BJ (cell line): ENCODE measurements at regions of chr1 and their contacts with region 1.

Region 1: GRCh38 chr1:24502709-24503058 is at the start of gene RCAN3:
- DNase-seq: no peak
- H3K4me3 ChIP-seq: peak within 1 kb of the TSS; percentile 73
- H3K27me3 ChIP-seq: no peaks in the 10 kb centered on the region
- CTCF ChIP-seq: no peak
- polyA plus RNA-seq, gene RCAN3: 6.3 and 7.6 TPM in 2 replicates

Region 2: DNA sequence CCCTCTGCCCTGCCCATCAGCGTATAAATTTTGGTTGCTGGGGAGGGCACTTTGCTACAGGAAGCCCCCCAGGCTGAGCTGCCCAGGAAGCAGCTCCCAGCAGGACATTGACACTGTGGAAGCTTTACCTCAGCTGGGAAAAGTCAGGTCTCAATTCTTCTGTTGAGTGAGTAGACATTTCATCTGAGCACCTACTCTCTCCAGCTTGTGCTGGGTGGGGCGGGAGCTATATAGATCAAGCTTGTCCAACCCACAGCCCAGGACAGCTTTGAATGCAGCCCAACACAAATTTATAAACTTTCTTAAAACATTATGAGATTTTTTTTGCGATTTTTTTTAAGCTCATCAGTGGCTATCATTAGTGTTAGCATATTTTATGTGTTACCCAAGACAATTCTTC is 77.7 kb before region 1 on chr1:
- CTCF ChIA-PET with region 1: no interaction called
- POLR2A ChIA-PET with region 1: interaction called, 11 read pairs
- DNase-seq: no peak
- H3K4me3 ChIP-seq: no peak overlapping the region
- H3K27me3 ChIP-seq: no peaks in the 10 kb centered on the region
- CTCF ChIP-seq: no peak

Region 3: DNA sequence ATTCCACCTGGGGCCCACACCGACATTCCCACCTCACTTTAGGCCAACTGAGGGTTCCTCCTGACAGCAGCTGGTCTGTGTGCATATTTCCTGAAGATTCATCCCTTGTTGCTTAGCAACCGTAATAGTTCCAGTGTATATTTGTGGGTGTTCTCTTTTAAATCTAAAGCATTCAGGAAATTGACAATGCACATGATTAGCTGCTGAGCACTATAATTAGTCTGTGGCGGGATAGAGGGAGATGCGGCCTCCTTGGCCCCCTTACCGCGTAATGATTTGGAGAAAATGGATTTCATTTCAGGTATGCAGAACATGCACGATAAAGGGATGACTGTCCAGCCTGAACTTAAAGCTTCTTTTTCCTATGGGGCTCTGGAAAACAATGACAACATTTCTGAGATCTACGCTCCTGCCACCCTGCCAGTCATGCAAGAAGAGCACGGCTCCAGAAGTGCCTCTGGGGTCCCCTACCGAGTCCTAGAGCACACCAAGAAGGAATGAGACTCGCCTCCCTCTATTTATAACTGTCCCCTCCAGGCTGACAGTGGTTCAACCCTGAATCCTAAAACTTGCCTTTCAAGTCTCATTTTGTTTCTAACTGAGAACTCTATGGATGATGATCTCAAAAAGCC is 33.9 kb before region 1 on chr1:
- CTCF ChIA-PET with region 1: no interaction called
- POLR2A ChIA-PET with region 1: no interaction called
- DNase-seq: no peak
- H3K4me3 ChIP-seq: no peak overlapping the region
- H3K27me3 ChIP-seq: no peaks in the 10 kb centered on the region
- CTCF ChIP-seq: no peak

Region 4: GRCh38 chr1:24491577-24492360 is 10.9 kb before region 1 on chr1:
- CTCF ChIA-PET with region 1: interaction called, 14 read pairs
- POLR2A ChIA-PET with region 1: no interaction called
- DNase-seq: no peak
- H3K4me3 ChIP-seq: no peak overlapping the region
- H3K27me3 ChIP-seq: peaks cover 2% of the 10 kb centered on the region; the same call in 1 of the 2 replicates
- CTCF ChIP-seq: 0 out of 2 replicates have a peak, but pooled peaks have one; percentile 17